Activated CD4-positive, alpha-beta T cell treated with anti-CD3 and anti-CD28 coated beads, Interleukin-2, amount 10 ng/mL, durations not matched to agents 24 days and 14 days (primary cell): ENCODE measurements at regions of chr5 and their contacts with region 1.

Region 1: GRCh38 chr5:59174248-59174844 is 591.5 kb downstream of the RAB3C start:
- DNase-seq: peak; percentile 81
- H3K4me3 Mint-ChIP-seq: peak overlapping the region; percentile 19
- H3K27ac Mint-ChIP-seq: no peak overlapping the region
- H3K4me1 Mint-ChIP-seq: peaks cover 33% of the 10 kb centered on the region
- H3K27me3 Mint-ChIP-seq: no peaks in the 10 kb centered on the region

Region 2: DNA sequence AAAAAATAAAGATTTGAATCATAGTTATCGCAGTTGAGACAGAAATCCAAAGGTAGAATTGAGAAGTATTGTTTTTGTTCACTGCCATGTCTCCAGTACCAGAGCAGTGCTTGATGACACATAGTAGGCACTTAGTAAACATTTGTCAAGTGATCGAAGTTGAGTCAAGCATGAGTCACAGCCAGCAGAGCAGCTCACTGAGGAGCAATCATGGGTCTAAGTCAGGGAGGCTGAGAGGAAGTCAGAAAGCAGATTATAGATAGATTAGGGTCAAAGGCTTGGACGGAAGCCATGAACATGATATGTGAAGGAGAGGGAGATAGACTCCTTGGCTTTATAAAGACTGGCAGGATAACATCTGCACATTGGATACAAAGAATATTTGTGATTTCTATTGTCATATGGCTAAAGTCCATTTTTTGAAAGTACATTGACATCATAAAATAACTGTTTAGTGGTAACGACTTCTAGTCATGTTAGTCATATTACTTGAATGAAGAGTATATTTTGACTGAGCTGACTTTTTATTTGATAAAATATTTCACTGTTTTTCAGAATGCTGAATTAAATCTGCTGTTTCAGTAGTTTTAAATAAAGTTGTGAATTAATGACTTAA is 423.0 kb before region 1 on chr5:
- intact Hi-C with region 1: no loop called
- DNase-seq: no peak
- H3K4me3 Mint-ChIP-seq: no peak overlapping the region
- H3K27ac Mint-ChIP-seq: no peak overlapping the region
- H3K4me1 Mint-ChIP-seq: no peaks in the 10 kb centered on the region
- H3K27me3 Mint-ChIP-seq: peaks cover 17% of the 10 kb centered on the region

Region 3: DNA sequence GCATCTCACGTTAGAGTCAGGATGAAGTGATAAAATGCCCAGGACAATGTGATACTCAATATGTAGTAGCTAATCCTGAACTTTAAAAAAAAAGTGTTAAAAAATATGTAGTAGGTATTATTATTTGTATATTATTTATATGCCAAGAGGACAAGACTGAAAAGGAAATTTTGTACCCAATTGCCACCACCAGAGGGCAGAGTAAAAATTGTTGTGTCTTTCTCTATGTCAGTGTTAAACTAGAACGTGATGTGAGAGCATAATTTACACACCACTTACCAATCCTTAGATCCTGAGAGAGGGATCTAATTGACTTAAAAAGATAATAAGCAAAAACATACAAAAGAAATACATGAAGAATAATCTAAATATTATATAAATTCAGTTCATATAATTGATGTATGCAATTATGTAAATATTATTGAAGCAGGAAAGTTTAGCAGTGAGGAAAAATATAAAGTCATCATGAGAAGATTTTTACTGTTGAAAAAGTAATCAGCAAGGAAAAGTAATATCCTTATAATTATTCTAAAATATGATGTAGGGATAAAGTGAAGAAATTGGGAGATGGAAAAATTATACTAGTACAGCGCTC is 302.6 kb before region 1 on chr5:
- intact Hi-C with region 1: loop called (anchors 5 kb)
- DNase-seq: peak; percentile 77
- H3K4me3 Mint-ChIP-seq: no peak overlapping the region
- H3K27ac Mint-ChIP-seq: no peak overlapping the region
- H3K4me1 Mint-ChIP-seq: no peaks in the 10 kb centered on the region
- H3K27me3 Mint-ChIP-seq: peaks cover 40% of the 10 kb centered on the region

Region 4: GRCh38 chr5:59039296-59040023 is 134.9 kb before region 1 on chr5:
- intact Hi-C with region 1: loop called (anchors 1 kb)
- DNase-seq: peak; percentile 97
- H3K4me3 Mint-ChIP-seq: peak overlapping the region; percentile 92
- H3K27ac Mint-ChIP-seq: peak overlapping the region; percentile 99
- H3K4me1 Mint-ChIP-seq: peaks cover 48% of the 10 kb centered on the region
- H3K27me3 Mint-ChIP-seq: no peaks in the 10 kb centered on the region

Region 5: GRCh38 chr5:59126708-59127573 is 47.4 kb before region 1 on chr5:
- intact Hi-C with region 1: loop called (anchors 1 kb)
- DNase-seq: no peak
- H3K4me3 Mint-ChIP-seq: no peak overlapping the region
- H3K27ac Mint-ChIP-seq: no peak overlapping the region
- H3K4me1 Mint-ChIP-seq: peaks cover 22% of the 10 kb centered on the region
- H3K27me3 Mint-ChIP-seq: no peaks in the 10 kb centered on the region